AG04449 (cell line): ENCODE measurements at regions of chr12 and their contacts with region 1.

Region 1: DNA sequence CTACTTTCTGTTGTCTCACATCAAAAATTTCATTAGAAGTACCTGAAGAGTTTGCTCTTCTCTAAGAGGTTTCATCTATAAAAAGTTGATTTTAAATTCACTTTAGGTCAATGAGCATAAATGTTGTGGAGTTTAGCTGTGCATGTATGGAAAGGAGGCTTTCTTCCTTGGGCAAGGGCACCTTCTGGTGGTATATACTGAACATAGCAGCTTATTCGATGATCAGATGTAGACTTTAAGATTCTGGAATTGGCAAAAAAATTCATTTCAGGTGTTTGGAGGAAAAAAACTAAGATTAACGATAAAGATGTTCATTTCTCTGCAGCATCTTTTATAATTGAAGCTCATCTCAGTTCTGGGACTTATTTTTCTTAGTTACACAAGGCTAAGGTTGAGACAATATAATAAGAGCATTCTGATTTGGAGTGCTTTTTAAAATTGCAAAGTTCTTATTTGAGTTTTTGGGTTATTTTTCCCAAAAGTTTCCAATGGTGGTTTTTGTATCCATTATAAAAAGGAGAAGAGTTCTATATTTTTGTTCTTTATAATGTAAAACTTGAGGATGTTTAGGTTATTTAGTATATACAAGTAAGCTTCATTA is 46.8 kb downstream of the TMEM117 start:
- DNase-seq: no peak
- H3K4me3 ChIP-seq: no peak overlapping the region
- CTCF ChIP-seq: peak; percentile 68

Region 2: DNA sequence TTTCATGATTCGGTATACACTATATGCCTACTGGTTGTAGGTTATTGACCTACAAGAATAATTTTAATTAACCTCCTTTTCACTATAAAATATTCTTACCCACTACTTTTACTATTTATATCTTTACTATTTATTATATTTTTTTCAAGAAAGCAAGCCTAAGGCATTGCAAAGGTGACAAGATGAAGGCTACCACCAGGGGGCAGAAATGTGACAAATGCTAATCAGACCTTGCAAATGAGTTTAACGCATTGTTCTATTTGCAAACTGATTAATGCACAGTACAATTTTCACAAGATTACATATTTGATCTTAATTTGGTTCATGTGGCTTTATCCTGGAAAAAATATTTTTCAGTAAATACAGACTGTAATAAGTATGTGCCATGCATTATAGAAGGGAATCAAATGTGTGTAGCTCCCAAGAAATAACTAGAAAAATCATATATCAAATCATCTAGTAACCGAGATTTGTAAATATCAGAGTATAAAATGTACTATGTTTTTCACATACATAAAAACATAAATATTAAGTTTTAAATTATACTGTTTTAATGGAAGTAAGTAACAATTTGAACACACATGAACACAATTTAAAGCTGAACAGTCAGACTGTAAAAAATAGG is 437.6 kb before region 1 on chr12:
- CTCF ChIA-PET with region 1: interaction called, 50 read pairs
- POLR2A ChIA-PET with region 1: no interaction called
- DNase-seq: peak; percentile 4
- H3K4me3 ChIP-seq: no peak overlapping the region
- CTCF ChIP-seq: peak; percentile 67

Region 3: GRCh38 chr12:43758728-43759563 is 123.7 kb before region 1 on chr12 and contains the starts of genes IRAK4 and PUS7L:
- CTCF ChIA-PET with region 1: interaction called, 15 read pairs
- POLR2A ChIA-PET with region 1: no interaction called
- DNase-seq: peak; percentile 72
- H3K4me3 ChIP-seq: peak within 1 kb of the TSS; percentile 85
- CTCF ChIP-seq: peak; percentile 55

Region 4: GRCh38 chr12:43805860-43806736 is 76.6 kb before region 1 on chr12 and contains the start of gene TWF1:
- CTCF ChIA-PET with region 1: interaction called, 37 read pairs
- POLR2A ChIA-PET with region 1: interaction called, 7 read pairs
- DNase-seq: no peak
- H3K4me3 ChIP-seq: peak within 1 kb of the TSS; percentile 89
- CTCF ChIP-seq: peak; percentile 53

Region 5: GRCh38 chr12:43872396-43872795 is 10.3 kb before region 1 on chr12:
- CTCF ChIA-PET with region 1: interaction called, 11 read pairs
- POLR2A ChIA-PET with region 1: no interaction called
- DNase-seq: no peak
- H3K4me3 ChIP-seq: no peak overlapping the region
- CTCF ChIP-seq: no peak

Region 6: GRCh38 chr12:44206045-44206444 is 323.4 kb after region 1 on chr12:
- CTCF ChIA-PET with region 1: no interaction called
- POLR2A ChIA-PET with region 1: no interaction called
- DNase-seq: no peak
- H3K4me3 ChIP-seq: no peak overlapping the region
- CTCF ChIP-seq: no peak